ENCODE measurements at regions of chr1 and their contacts with region 1.

Region 1: DNA sequence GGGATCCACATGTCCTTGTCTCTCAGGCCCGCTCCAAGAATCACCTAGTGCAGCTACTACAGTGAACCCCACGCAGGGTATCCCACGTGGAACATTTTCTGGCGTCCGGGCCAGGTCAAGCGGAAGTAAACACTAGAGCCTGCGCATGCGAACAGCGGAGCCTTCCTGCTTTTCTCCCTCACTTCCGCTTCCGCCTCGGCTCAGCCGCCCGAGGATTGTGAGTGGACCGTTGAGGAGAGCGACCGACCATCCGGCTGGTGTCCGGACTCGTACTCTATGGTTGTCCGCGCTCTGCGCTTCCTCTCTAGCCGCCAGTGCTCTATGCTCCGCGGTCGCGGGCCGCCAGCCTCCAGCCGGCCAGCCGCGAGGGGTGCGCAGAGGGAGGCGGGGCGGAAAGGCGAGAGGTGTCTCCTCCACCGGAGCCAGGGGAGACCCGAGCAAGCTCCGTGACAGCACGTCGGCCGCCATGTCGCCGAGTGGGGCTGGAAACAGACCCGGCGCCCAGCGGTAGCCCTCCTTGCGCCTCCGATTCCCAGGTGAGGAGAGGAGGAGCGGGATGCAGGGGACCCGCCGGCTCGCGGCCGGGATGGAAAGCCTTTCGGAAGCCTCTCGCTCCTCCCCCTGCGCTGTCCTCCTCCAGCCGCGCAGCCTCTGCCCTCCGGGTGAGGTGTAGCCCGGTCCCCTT is at the starts of genes CNST and TFB2M:
- DNase-seq: peak; percentile 95 to 99 (median 96)

Region 2: DNA sequence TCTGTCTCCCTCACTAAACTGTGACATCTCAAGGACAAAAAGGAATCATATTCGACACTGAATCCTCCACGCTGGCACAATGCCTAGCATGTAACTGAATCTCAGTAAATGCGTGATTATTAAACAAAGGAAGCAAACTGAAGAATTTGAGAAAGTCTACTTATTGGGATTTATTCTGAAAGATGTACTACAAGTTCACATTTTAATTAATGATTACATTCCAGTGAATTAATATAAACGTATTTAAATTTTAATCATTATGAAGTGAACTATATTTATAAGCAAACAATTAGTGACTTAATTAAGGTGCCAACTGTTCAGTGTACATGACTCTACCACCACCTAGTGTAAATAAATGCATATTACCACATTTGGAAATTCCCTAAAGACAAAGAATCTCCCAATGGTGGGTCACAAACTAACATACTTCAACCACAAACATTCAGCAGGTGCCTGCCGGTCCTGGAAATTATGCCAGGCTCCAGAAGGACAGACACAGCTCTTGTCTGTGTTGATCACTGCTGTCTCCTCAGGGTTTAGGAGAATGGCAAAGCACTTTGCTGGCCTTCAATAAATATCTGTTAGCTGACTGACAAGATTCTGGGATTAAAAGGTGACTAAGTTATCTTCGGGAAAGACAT is 115.5 kb before region 1 on chr1:
- intact Hi-C with region 1: no loop called
- DNase-seq: no peak

Region 3: GRCh38 chr1:246724016-246724730 is 157.9 kb after region 1 on chr1 and contains the start of gene SCCPDH:
- intact Hi-C with region 1: loop called (anchors 10 kb)
- DNase-seq: peak; percentile 66 to 97 (median 80)

Measured in posterior cingulate gyrus (tissue), 11 donors.